Endothelial cell of umbilical vein (primary cell): ENCODE measurements at regions of chr7 and their contacts with region 1.

Region 1: DNA sequence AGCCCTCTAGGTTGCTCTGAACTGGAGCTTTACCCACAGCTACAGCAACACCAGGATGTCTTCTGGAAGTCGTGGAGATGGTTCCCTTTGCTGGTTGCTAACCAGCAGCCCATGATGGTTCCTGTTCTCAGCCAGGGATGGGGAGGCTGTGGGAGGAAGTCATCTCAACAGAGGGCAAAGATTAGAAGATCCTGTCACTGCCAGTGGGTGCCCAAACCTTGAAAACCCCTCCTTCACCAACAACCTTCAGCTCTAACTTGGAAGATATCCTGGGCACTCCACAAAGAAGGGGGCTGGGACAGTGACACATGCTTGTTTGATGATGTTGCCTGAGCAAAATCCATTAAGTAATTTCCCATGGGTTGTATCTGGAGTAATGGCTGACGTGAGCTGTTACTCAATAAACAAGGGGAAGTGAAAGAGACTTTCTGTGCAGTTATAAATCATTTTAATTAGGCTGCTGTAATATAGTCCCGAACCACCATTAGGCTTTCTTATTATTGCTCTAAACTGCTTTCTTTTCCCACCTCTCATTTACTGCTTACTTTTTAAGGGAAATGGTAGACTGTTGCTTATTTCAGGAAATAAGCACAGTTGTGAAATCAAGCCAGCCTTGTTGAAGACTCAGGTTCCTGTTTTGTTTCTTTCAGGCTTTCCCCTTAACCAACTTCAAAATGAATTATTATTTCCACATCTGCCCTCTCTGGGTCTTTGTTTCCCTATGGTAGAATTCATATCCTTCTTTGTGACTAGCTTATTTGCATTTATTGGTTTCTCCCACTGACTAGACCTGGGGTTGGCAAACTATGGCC is 124.8 kb downstream of the PPP1R17 start:
- DNase-seq: peak; percentile 56
- H3K4me3 ChIP-seq: no peak overlapping the region
- H3K27ac ChIP-seq: no peak overlapping the region
- H3K4me1 ChIP-seq: peaks cover 26% of the 10 kb centered on the region
- H3K27me3 ChIP-seq: no peaks in the 10 kb centered on the region
- CTCF ChIP-seq: no peak
- POLR2A ChIP-seq: no peak

Region 2: DNA sequence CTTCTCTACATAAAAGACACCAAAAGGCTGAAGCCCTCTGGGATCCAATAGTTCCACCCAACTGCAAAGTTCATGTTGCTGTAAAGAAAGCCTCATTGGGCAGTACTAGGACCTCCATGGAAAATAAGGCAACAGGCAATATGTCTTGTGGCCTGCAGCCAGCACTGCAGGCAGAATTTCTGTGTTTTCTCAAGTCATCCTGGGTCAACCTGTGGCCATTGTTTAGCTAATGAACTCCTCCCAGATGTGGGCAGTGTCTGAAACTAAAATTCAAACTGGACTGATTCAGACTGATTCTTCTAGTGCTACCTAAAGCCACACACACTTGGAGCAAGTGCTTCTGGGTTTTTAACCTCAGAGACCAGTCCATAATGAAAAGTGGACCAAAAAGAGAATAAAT is 16.7 kb after region 1 on chr7:
- CTCF ChIA-PET with region 1: interaction called, 10 read pairs
- POLR2A ChIA-PET with region 1: no interaction called
- dilution Hi-C with region 1: no loop called
- intact Hi-C with region 1: no loop called
- DNase-seq: peak; percentile 50
- H3K4me3 ChIP-seq: no peak overlapping the region
- H3K27ac ChIP-seq: no peak overlapping the region
- H3K4me1 ChIP-seq: peaks cover 20% of the 10 kb centered on the region
- H3K27me3 ChIP-seq: no peaks in the 10 kb centered on the region
- CTCF ChIP-seq: no peak
- POLR2A ChIP-seq: no peak

Region 3: GRCh38 chr7:31938653-31939052 is 126.8 kb after region 1 on chr7:
- CTCF ChIA-PET with region 1: interaction called, 21 read pairs
- POLR2A ChIA-PET with region 1: no interaction called
- dilution Hi-C with region 1: no loop called
- intact Hi-C with region 1: no loop called
- DNase-seq: peak; percentile 6
- H3K4me3 ChIP-seq: no peak overlapping the region
- H3K27ac ChIP-seq: no peak overlapping the region
- H3K4me1 ChIP-seq: peaks cover 10% of the 10 kb centered on the region
- H3K27me3 ChIP-seq: no peaks in the 10 kb centered on the region
- CTCF ChIP-seq: no peak
- POLR2A ChIP-seq: no peak

Region 4: DNA sequence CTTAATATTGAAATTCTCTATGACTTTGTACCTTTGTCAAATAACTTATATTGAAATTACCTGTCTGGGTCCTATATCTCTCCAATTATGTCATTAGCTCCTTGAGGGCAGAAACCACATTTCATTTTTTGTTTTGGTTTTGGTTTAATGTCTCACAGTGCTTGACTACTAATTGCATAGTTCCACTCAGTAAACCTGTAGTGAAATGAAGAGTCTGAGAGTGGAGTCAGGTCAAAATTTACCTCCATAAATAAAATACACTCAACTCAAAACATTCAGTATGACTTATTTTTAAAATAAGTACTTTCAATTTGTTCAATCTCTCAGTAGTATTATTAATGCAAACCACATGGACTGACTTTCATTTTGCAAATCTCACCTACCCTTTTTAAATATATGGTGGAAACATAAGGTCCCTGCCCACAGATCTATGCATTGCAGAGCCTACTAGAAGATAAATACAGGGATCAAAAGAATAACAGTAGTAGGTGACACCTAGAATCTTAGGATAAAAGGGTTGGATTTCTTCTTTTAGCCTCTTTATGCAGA is 225.9 kb after region 1 on chr7:
- CTCF ChIA-PET with region 1: interaction called, 11 read pairs
- POLR2A ChIA-PET with region 1: no interaction called
- dilution Hi-C with region 1: no loop called
- intact Hi-C with region 1: loop called (anchors 2 kb)
- DNase-seq: no peak
- H3K4me3 ChIP-seq: no peak overlapping the region
- H3K27ac ChIP-seq: no peak overlapping the region
- H3K4me1 ChIP-seq: no peaks in the 10 kb centered on the region
- H3K27me3 ChIP-seq: no peaks in the 10 kb centered on the region
- CTCF ChIP-seq: no peak
- POLR2A ChIP-seq: no peak

Region 5: DNA sequence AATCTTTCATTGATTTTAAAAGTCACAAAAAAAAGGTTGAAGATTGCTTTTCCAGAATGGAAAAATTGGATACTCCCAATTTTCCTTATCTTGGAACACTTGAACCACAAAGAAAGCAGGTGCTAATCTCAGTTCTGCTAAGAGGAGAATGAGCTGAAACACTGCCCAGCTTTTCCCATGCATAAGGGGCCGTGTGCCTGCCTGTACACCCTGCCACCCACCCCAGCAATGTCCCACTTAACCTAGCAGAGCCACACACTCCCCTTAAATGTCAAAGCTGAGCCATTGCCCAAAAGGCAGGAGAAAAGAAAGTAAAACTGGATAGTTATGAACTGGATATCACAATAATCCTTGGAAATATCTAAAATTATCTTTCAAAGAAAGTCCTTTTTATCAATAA is 244.9 kb after region 1 on chr7:
- CTCF ChIA-PET with region 1: interaction called, 67 read pairs
- POLR2A ChIA-PET with region 1: no interaction called
- dilution Hi-C with region 1: no loop called
- intact Hi-C with region 1: no loop called
- DNase-seq: no peak
- H3K4me3 ChIP-seq: no peak overlapping the region
- H3K27ac ChIP-seq: no peak overlapping the region
- H3K4me1 ChIP-seq: no peaks in the 10 kb centered on the region
- H3K27me3 ChIP-seq: no peaks in the 10 kb centered on the region
- CTCF ChIP-seq: no peak
- POLR2A ChIP-seq: no peak

Region 6: DNA sequence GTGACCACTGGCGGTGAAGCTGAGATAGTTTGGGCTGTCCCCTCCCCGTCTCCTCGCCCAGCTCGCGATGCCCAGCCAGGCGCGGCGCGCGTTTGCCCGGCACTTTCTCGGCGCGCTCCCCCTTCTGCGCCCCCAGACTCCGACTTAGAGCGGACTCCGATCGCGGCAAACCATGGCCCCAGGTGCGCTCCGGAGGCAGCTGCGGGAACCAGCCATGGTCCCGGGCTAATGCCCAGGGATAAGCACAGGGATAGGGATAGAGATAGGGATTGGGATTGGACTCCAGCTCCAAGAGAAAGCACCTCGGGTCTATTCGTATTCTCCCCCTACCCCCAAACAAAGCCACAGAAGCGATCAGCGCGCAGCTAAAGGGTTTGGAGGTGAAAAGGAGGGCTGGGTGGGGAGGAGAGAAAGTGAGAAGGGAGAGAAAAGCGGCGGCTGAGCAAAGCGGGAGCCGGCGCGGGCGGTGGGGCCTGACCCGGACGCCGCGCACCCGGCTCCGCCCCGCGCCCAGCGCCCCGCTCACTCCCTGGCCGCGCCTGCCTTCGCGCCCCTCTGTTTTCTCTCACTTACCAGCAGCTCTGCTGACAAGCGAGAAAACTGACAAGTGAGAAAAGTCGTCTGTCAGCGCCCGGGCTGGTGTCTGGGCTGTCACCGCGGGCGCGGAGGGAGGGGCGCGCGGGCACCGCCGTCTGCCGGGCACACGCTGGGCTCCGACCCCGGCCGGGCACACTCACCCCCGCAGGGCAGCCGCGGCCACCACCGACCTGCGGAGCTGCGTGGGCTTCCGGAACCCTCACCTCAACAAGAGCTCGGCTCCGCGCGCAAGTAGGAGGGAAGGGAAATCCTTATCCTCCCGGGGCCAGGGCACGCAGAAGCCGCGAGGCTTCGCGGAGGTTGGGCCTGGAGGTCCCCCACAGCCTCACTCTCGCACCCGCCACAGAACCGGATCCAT is 258.8 kb after region 1 on chr7 and contains the start of gene PDE1C:
- CTCF ChIA-PET with region 1: interaction called, 22 read pairs
- POLR2A ChIA-PET with region 1: no interaction called
- dilution Hi-C with region 1: no loop called
- intact Hi-C with region 1: no loop called
- DNase-seq: no peak
- H3K4me3 ChIP-seq: peak within 1 kb of the TSS; percentile 27 to 78 (median 42)
- H3K27ac ChIP-seq: no peak within 1 kb of the TSS
- H3K4me1 ChIP-seq: no peaks in the 10 kb centered on the region
- H3K27me3 ChIP-seq: peaks cover 20 to 63% of the 10 kb centered on the region in 2 experiments
- CTCF ChIP-seq: no peak
- POLR2A ChIP-seq: no peak
- total RNA-seq, gene PDE1C: 2.9 and 3.1 TPM in 2 replicates